ENCODE measurements at regions of chr18 and their contacts with region 1.

Region 1: GRCh38 chr18:62714671-62715435 is 488 bp upstream of the PHLPP1 start:
- DNase-seq: peak; percentile 100
- H3K4me3 ChIP-seq: peak overlapping the region; percentile 21 to 76 (median 45)
- H3K27ac ChIP-seq: peak overlapping the region; percentile 88
- H3K4me1 ChIP-seq: peaks cover 20% of the 10 kb centered on the region
- H3K27me3 ChIP-seq: peaks cover 0 to 2% of the 10 kb centered on the region in 2 experiments
- CTCF ChIP-seq: peak; percentile 73 to 79
- POLR2A ChIP-seq: no peak

Region 2: DNA sequence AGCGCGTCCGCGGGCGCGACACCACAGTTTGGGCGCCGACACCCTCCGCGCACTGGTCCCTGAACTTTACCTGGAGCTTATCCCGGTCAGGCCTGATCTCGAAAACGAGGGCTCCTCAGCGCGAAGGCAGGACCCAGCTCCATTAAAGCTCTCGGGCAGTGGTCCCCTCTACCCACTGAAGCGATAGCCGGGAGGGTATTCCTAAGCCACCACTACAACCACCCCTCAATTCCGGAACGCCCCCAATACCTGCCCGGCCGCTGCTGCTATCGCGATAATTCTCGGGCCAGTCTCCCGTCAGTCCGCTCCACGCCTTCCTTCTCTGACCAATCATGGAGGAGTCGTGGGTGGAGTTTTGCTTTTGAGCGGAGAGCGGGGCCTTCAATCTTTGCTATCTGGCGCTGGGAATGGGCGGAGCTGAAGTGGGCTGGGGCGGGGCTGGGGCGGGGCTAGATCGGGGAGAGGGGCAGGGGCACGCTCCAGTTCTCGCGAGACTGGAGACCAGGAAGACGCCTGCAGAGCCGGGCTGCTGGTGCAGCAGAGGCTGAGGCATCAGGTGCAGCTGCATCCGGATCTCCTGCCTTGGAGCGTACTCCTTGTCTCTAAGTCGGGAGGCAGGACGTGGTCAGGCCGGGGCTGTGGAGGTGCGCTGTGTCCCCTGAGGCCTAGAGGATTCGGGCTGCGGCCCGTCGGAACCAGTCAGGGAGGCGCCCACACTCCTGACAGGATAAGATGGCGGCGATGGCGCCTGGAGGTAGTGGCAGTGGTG is 527.9 kb before region 1 on chr18 and contains the starts of genes PIGN and RELCH:
- CTCF ChIA-PET with region 1: interaction called, 3 read pairs
- POLR2A ChIA-PET with region 1: no interaction called
- dilution Hi-C with region 1: no loop called
- intact Hi-C with region 1: loop called (anchors 1 kb)
- DNase-seq: peak; percentile 99
- H3K4me3 ChIP-seq: peak within 1 kb of the TSS; percentile 86 to 97 (median 94)
- H3K27ac ChIP-seq: peak within 1 kb of the TSS; percentile 79
- H3K4me1 ChIP-seq: peaks cover 34% of the 10 kb centered on the region
- H3K27me3 ChIP-seq: no peaks in the 10 kb centered on the region
- CTCF ChIP-seq: no peak
- POLR2A ChIP-seq: peak; percentile 88
- total RNA-seq, gene PIGN: 26.1 and 31.1 TPM in 2 replicates
- total RNA-seq, gene RELCH: 20.7 and 25.2 TPM in 2 replicates

Region 3: GRCh38 chr18:62637807-62638687 is 76.8 kb before region 1 on chr18:
- CTCF ChIA-PET with region 1: interaction called, 4 read pairs
- POLR2A ChIA-PET with region 1: no interaction called
- dilution Hi-C with region 1: no loop called
- intact Hi-C with region 1: loop called (anchors 2 kb)
- DNase-seq: peak; percentile 18
- H3K4me3 ChIP-seq: no peak overlapping the region
- H3K27ac ChIP-seq: no peak overlapping the region
- H3K4me1 ChIP-seq: no peaks in the 10 kb centered on the region
- H3K27me3 ChIP-seq: peaks cover 3 to 5% of the 10 kb centered on the region in 2 experiments
- CTCF ChIP-seq: peak; percentile 54 to 71
- POLR2A ChIP-seq: no peak

Region 4: GRCh38 chr18:62802523-62802922 is 87.7 kb after region 1 on chr18:
- CTCF ChIA-PET with region 1: interaction called, 5 read pairs
- POLR2A ChIA-PET with region 1: no interaction called
- dilution Hi-C with region 1: no loop called
- intact Hi-C with region 1: loop called (anchors 1 kb)
- DNase-seq: peak; percentile 18
- H3K4me3 ChIP-seq: no peak overlapping the region
- H3K27ac ChIP-seq: no peak overlapping the region
- H3K4me1 ChIP-seq: peaks cover 2% of the 10 kb centered on the region
- H3K27me3 ChIP-seq: no peaks in the 10 kb centered on the region
- CTCF ChIP-seq: no peak
- POLR2A ChIP-seq: no peak

Region 5: GRCh38 chr18:62938487-62938886 is 223.6 kb after region 1 on chr18:
- CTCF ChIA-PET with region 1: interaction called, 16 read pairs
- POLR2A ChIA-PET with region 1: no interaction called
- dilution Hi-C with region 1: no loop called
- intact Hi-C with region 1: loop called (anchors 5 kb)
- DNase-seq: no peak
- H3K4me3 ChIP-seq: no peak overlapping the region
- H3K27ac ChIP-seq: no peak overlapping the region
- H3K4me1 ChIP-seq: peaks cover 12% of the 10 kb centered on the region
- H3K27me3 ChIP-seq: no peaks in the 10 kb centered on the region
- CTCF ChIP-seq: no peak
- POLR2A ChIP-seq: no peak

Region 6: GRCh38 chr18:62982600-62983251 is 267.9 kb after region 1 on chr18:
- CTCF ChIA-PET with region 1: interaction called, 106 read pairs
- POLR2A ChIA-PET with region 1: interaction called, 3 read pairs
- dilution Hi-C with region 1: no loop called
- intact Hi-C with region 1: loop called (anchors 1 kb)
- DNase-seq: peak; percentile 65
- H3K4me3 ChIP-seq: no peak overlapping the region
- H3K27ac ChIP-seq: no peak overlapping the region
- H3K4me1 ChIP-seq: peaks cover under 1% of the 10 kb centered on the region
- H3K27me3 ChIP-seq: no peaks in the 10 kb centered on the region
- CTCF ChIP-seq: peak; percentile 72 to 75
- POLR2A ChIP-seq: no peak